ENCODE measurements at regions of chr18 and their contacts with region 1.

Region 1: DNA sequence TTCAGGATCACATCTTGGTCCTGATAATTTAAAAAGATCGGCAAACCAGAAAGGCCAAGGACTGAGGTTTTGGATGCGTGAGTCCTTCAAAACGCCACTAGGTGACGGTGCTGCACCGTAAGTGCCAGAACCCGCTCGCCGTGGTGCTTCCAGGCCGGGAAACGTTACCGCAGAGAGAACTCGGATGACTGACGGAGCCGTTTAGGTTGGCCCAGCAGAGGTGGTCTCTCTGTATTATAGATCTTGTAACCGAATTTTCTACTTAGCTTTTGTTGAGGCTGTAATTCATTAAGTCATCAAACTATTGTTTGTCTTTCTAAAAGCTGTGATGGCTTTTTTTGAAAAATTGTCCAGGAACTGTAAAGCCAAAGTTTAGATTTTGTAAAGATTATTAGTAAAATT is 39.8 kb upstream of the ADCYAP1 start:
- DNase-seq: peak; percentile 60 to 80
- H3K4me3 ChIP-seq: no peak overlapping the region
- H3K27ac ChIP-seq: no peak overlapping the region
- H3K4me1 ChIP-seq: peaks cover 0 to 3% (median 0%) of the 10 kb centered on the region in 4 experiments; a peak in 1 of 7 replicates
- H3K27me3 ChIP-seq: no peaks in the 10 kb centered on the region
- CTCF ChIP-seq: peak; percentile 96 to 99 (median 97)
- EP300 ChIP-seq: no peak
- POLR2A ChIP-seq: no peak
- RAD21 ChIP-seq: peak; percentile 100

Region 2: GRCh38 chr18:853471-853870 is 11.4 kb before region 1 on chr18:
- CTCF ChIA-PET with region 1: interaction called, 13 read pairs
- POLR2A ChIA-PET with region 1: no interaction called
- DNase-seq: no peak
- H3K4me3 ChIP-seq: no peak overlapping the region
- H3K27ac ChIP-seq: no peak overlapping the region
- H3K4me1 ChIP-seq: no peaks in the 10 kb centered on the region; a peak in 1 of 7 replicates
- H3K27me3 ChIP-seq: no peaks in the 10 kb centered on the region
- CTCF ChIP-seq: no peak
- EP300 ChIP-seq: no peak
- POLR2A ChIP-seq: no peak
- RAD21 ChIP-seq: no peak

Measured in H1 (cell line).